ENCODE measurements at regions of chr9 and their contacts with region 1.

Region 1: GRCh38 chr9:133144137-133144903 is 19.4 kb downstream of the GBGT1 start:
- DNase-seq: peak; percentile 81 to 92 (median 86)
- ATAC-seq: peak; percentile 69
- H3K4me3 ChIP-seq: peak overlapping the region; percentile 34
- H3K4me3 Mint-ChIP-seq: peak overlapping the region; percentile 70 to 88 (median 84)
- H3K27ac ChIP-seq: peak overlapping the region; percentile 70
- H3K27ac Mint-ChIP-seq: peak overlapping the region; percentile 87 to 96 (median 92)
- H3K4me1 ChIP-seq: peaks cover 51 to 71% of the 10 kb centered on the region in 2 donors
- H3K4me1 Mint-ChIP-seq: peaks cover 28 to 74% (median 65%) of the 10 kb centered on the region in 7 donors
- H3K27me3 ChIP-seq: no peaks in the 10 kb centered on the region
- H3K27me3 Mint-ChIP-seq: no peaks in the 10 kb centered on the region

Region 2: GRCh38 chr9:133041958-133042357 is 102.4 kb before region 1 on chr9:
- CTCF ChIA-PET with region 1: interaction called, 11 read pairs
- POLR2A ChIA-PET with region 1: no interaction called
- intact Hi-C with region 1: loop called (anchors 1 kb)
- DNase-seq: no peak
- ATAC-seq: no peak
- H3K4me3 ChIP-seq: no peak overlapping the region
- H3K4me3 Mint-ChIP-seq: no peak overlapping the region
- H3K27ac ChIP-seq: no peak overlapping the region
- H3K27ac Mint-ChIP-seq: no peak overlapping the region
- H3K4me1 ChIP-seq: no peaks in the 10 kb centered on the region
- H3K4me1 Mint-ChIP-seq: peaks cover 8 to 32% (median 20%) of the 10 kb centered on the region in 7 donors
- H3K27me3 ChIP-seq: no peaks in the 10 kb centered on the region
- H3K27me3 Mint-ChIP-seq: no peaks in the 10 kb centered on the region

Region 3: GRCh38 chr9:133103183-133103986 is 40.9 kb before region 1 on chr9:
- CTCF ChIA-PET with region 1: interaction called, 161 read pairs
- POLR2A ChIA-PET with region 1: interaction called, 13 read pairs
- intact Hi-C with region 1: loop called (anchors 1 kb)
- DNase-seq: peak in 8 of 9 donors; percentile 30 to 70 (median 53)
- ATAC-seq: peak; percentile 84
- H3K4me3 ChIP-seq: no peak overlapping the region
- H3K4me3 Mint-ChIP-seq: peak overlapping the region in 1 of 10 donors; percentile 45
- H3K27ac ChIP-seq: no peak overlapping the region
- H3K27ac Mint-ChIP-seq: peak overlapping the region in 6 of 9 donors; percentile 25 to 82 (median 60)
- H3K4me1 ChIP-seq: no peaks in the 10 kb centered on the region
- H3K4me1 Mint-ChIP-seq: peaks cover 0 to 4% (median 0%) of the 10 kb centered on the region in 7 donors
- H3K27me3 ChIP-seq: no peaks in the 10 kb centered on the region
- H3K27me3 Mint-ChIP-seq: no peaks in the 10 kb centered on the region

Region 4: DNA sequence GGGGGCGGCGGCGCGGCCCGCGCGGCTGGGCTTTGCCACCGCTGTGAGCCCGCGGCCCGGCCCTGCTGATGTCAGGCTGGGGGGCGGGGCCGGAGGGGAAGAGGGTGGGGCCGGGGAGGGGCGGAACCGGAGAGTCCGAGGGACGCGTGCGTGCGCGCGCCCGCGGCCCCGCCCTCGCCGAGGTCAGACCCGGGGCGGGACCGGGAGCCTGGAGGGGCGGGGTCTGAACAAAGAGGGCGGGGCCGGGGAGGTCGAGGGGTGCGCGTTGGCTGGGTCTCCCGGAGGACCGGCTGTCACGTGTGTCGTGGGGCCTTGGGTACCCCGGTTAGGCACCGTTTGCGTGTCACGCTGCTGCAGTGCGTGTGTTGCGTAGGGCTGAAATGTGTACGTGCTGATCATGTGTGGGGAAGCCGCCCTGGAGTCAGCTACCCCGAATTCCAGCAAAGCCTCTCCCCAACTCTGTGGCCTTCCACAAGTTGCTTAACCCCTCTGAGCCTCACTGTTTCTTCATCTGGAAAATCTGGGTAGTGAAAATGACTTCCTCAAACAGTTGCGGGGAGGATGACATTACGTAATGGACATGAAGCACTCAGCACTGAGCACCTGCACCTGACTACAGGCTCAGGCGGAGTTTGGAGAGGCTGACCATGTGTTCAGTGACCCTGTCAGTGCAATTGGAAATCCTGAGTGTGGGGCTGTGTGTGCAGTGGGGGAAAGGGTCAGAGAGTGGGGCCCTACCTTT is 23.0 kb before region 1 on chr9 and contains the start of gene RALGDS:
- CTCF ChIA-PET with region 1: interaction called, 22 read pairs
- POLR2A ChIA-PET with region 1: interaction called, 15 read pairs
- intact Hi-C with region 1: loop called (anchors 1 kb)
- DNase-seq: peak; percentile 79 to 93 (median 88)
- ATAC-seq: peak; percentile 91
- H3K4me3 ChIP-seq: peak within 1 kb of the TSS; percentile 58
- H3K4me3 Mint-ChIP-seq: peak within 1 kb of the TSS; percentile 78 to 88 (median 82)
- H3K27ac ChIP-seq: peak within 1 kb of the TSS; percentile 93
- H3K27ac Mint-ChIP-seq: peak within 1 kb of the TSS; percentile 58 to 99 (median 98)
- H3K4me1 ChIP-seq: peaks cover 22 to 52% of the 10 kb centered on the region in 2 donors
- H3K4me1 Mint-ChIP-seq: peaks cover 27 to 74% (median 47%) of the 10 kb centered on the region in 7 donors
- H3K27me3 ChIP-seq: no peaks in the 10 kb centered on the region
- H3K27me3 Mint-ChIP-seq: no peaks in the 10 kb centered on the region
- total RNA-seq, gene RALGDS: 73.9 to 123 (median 79.7) TPM

Measured in naive thymus-derived CD4-positive, alpha-beta T cell (primary cell).